GM10248 (cell line): ENCODE measurements at regions of chr15 and their contacts with region 1.

Region 1: GRCh38 chr15:59528965-59529402 is 82.6 kb upstream of the GCNT3 start:
- DNase-seq: peak; percentile 66
- CTCF ChIP-seq: peak; percentile 75

Region 2: GRCh38 chr15:58212909-58213526 is 1316.0 kb before region 1 on chr15:
- CTCF ChIA-PET with region 1: interaction called, 10 read pairs
- POLR2A ChIA-PET with region 1: no interaction called
- DNase-seq: no peak
- CTCF ChIP-seq: peak; percentile 26

Region 3: DNA sequence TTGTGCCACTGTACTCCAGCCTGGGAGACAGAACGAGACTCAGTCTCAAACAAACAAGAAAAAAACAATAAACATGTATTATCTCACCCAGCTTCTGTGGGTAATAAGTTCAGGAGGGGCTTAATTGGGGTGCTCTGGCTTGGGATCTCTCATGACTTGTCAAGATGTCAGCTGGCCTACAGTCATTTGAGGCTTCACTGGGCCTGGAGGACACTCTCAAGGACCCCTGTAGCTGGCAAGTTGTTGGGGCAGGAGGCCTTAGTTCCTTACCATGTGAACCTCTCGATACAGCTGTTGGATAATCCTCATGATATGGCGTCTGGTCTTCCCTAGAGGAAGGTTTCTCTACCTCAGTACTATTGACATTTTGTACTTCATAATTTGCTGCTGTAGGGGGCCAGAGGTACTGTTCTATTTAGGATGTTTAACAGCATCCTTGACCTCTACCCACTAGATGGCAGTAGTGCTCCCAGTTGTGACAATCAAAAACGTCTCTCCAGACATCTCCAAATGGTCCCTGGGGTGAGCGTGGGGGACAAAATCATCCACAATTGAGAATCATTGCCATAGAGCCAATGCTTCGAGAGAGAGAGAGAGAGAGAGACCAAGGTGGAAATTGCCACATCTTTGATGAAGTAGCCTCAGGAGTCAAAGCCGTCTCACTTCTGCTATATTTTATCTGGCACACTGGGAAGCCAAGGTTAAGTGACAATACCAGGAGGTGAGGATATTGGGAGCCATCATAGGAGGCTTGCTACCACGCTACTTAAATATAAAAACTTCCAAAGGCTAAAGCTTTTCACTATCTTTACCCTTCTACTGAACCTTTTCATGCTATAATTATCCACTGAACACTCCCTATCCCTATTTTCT is 571.6 kb before region 1 on chr15:
- CTCF ChIA-PET with region 1: interaction called, 15 read pairs
- POLR2A ChIA-PET with region 1: no interaction called
- DNase-seq: peak; percentile 59
- CTCF ChIP-seq: peak; percentile 35

Region 4: GRCh38 chr15:59501597-59501996 is 27.4 kb before region 1 on chr15:
- CTCF ChIA-PET with region 1: interaction called, 16 read pairs
- POLR2A ChIA-PET with region 1: no interaction called
- DNase-seq: peak; percentile 72
- CTCF ChIP-seq: peak; percentile 61

Region 5: GRCh38 chr15:59543721-59544547 is 14.9 kb after region 1 on chr15:
- CTCF ChIA-PET with region 1: interaction called, 33 read pairs
- POLR2A ChIA-PET with region 1: no interaction called
- DNase-seq: peak; percentile 59
- CTCF ChIP-seq: no peak

Region 6: GRCh38 chr15:59622289-59622688 is 93.3 kb after region 1 on chr15:
- CTCF ChIA-PET with region 1: interaction called, 18 read pairs
- POLR2A ChIA-PET with region 1: no interaction called
- DNase-seq: peak; percentile 79
- CTCF ChIP-seq: peak; percentile 42

Region 7: GRCh38 chr15:59764775-59765174 is 235.8 kb after region 1 on chr15:
- CTCF ChIA-PET with region 1: no interaction called
- POLR2A ChIA-PET with region 1: no interaction called
- DNase-seq: no peak
- CTCF ChIP-seq: no peak